ENCODE measurements at regions of chr1 and their contacts with region 1.

Region 1: DNA sequence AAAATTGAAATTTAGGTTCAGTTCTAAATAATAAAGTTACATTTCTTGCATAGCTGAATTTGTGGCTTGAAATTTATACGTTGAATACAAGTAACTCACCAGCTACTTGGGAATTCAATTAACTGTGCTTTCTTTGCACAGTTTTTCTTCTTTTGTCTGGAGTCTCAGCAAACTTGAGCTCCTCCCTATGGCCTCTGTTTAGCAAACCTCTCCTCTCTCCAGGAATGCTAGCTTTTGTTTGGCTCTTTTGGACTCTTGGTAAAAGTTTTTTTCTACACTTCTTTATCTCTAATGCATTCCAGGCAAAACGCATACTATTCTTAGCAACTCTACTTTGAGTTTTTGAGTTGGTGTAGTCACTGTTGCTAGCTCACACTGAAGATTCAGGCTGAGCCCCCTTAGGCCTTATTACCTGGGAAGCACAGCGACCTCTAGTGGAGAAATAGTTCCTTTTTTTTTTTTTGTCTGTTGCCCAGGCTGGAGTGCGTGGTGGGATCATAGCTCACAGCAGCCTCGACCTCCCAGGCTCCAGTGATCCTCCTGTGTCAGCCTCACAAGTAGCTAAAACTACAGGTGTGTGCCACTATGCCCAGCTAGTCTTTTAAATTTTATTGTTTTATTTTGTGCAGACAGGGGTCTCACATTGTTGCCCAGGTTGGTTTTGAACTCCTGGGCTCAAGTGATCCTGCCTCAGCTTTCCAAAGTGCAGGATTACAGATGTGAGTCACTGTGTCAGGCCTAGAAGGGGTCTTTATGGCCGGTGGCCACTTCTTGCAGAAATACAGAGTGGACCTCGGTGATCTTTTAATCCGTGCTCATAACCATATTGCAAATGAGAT is 61.7 kb downstream of the CASQ2 start:
- DNase-seq: peak; percentile 71
- ATAC-seq: peak; percentile 34
- H3K4me3 ChIP-seq: no peak overlapping the region
- H3K27ac ChIP-seq: no peak overlapping the region
- H3K4me1 ChIP-seq: peaks cover 25% of the 10 kb centered on the region
- H3K27me3 ChIP-seq: no peaks in the 10 kb centered on the region
- CTCF ChIP-seq: peak; percentile 91

Region 2: GRCh38 chr1:115609021-115609420 is 97.8 kb before region 1 on chr1:
- CTCF ChIA-PET with region 1: interaction called, 57 read pairs
- POLR2A ChIA-PET with region 1: no interaction called
- intact Hi-C with region 1: loop called (anchors 1 kb)
- DNase-seq: peak; percentile 17
- ATAC-seq: peak; percentile 22; the same call in 1 of the 2 replicates
- H3K4me3 ChIP-seq: no peak overlapping the region
- H3K27ac ChIP-seq: no peak overlapping the region
- H3K4me1 ChIP-seq: peaks cover 10% of the 10 kb centered on the region
- H3K27me3 ChIP-seq: no peaks in the 10 kb centered on the region
- CTCF ChIP-seq: no peak

Region 3: DNA sequence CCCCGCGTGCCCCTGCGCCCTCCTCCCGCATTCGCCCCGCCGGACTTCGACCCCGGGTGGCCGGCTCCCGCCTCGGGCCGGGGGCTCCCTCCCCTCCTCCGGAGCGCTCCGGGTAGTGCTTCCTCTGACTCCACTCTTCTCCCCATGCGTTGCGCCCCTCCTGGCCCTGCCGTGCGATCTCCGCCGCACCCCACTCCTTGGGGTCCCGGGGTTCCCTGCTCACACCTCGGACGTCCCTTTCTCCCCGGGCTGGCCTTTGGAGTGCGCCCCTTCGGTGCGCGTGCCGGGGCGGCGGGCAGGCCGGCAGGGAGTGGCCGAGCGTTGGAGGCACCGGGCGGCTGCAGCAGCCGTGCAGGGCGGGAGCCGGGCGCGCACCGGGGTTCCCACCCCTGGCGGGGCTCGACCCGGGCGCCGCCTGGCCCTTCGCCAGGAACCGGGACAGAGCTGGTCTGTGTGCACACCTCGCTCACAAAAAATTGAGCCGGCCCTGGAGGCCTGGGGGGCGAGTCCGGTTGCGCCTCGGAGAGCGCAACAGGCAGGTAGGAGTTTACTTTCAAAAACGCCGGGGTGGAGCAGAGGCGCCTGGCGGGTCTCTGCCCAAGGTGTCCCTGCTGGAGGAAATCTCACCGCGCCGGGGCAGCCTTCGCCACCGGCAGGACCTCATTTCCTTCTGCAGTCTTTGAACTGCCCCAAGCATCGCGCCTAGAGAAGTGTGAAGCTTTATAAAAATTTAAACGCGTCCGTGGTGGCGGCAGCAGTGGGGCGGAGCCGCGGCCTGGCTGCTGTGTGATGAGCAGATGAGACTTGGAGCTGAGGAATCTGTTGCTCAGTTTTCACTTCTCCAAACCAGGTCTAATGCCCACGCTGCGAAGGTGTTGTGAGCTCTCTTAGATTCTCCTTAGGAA is 64.4 kb before region 1 on chr1:
- CTCF ChIA-PET with region 1: interaction called, 26 read pairs
- POLR2A ChIA-PET with region 1: no interaction called
- intact Hi-C with region 1: no loop called
- DNase-seq: peak; percentile 56
- ATAC-seq: peak; percentile 56
- H3K4me3 ChIP-seq: peak overlapping the region; percentile 76
- H3K27ac ChIP-seq: peak overlapping the region; percentile 33
- H3K4me1 ChIP-seq: peaks cover 29% of the 10 kb centered on the region
- H3K27me3 ChIP-seq: no peaks in the 10 kb centered on the region
- CTCF ChIP-seq: 0 out of 2 replicates have a peak, but pooled peaks have one; percentile 25

Region 4: DNA sequence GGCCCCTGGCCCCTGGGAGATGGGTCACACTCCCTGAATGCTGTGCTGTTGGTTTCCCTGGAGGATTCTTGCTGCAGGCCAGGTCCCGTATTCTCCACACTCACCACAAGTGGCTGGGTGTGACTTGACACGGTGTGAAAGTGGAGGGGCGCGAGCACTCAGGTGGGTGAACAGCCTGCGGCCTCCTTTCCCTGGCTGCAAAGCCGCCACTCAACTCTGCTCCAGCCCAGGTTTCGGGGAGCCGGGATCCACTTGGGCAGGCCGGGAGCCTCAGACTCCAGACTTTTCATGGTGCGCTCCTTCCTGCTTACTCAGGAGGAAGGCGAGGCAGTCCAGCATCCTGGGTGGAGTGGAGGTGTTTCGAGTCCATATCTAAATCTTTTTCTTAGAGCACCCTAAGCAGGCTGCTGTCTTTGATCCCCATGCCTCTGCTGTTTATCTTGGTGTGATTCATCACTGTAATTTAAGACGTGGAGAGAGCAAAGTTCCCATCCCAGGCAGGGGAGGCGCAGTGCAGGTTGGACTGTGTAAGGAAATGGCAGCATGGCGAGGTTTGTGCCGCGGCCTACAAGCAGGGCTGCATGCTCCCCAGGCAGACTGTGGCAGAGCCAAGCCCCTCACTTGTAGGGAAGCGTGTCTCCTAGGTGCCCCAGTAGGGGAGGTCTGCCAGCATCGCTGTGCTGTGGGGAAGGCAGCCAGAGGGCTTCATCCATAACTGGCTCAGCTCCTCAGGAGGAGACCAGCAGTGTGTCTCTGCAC is 35.5 kb before region 1 on chr1:
- CTCF ChIA-PET with region 1: interaction called, 15 read pairs
- POLR2A ChIA-PET with region 1: interaction called, 4 read pairs
- intact Hi-C with region 1: no loop called
- DNase-seq: peak; percentile 86
- ATAC-seq: peak; percentile 79
- H3K4me3 ChIP-seq: peak overlapping the region; percentile 38; the same call in 1 of the 2 replicates
- H3K27ac ChIP-seq: peak overlapping the region; percentile 94
- H3K4me1 ChIP-seq: peaks cover 58% of the 10 kb centered on the region
- H3K27me3 ChIP-seq: no peaks in the 10 kb centered on the region
- CTCF ChIP-seq: peak; percentile 31; the same call in 1 of the 2 replicates

Region 5: DNA sequence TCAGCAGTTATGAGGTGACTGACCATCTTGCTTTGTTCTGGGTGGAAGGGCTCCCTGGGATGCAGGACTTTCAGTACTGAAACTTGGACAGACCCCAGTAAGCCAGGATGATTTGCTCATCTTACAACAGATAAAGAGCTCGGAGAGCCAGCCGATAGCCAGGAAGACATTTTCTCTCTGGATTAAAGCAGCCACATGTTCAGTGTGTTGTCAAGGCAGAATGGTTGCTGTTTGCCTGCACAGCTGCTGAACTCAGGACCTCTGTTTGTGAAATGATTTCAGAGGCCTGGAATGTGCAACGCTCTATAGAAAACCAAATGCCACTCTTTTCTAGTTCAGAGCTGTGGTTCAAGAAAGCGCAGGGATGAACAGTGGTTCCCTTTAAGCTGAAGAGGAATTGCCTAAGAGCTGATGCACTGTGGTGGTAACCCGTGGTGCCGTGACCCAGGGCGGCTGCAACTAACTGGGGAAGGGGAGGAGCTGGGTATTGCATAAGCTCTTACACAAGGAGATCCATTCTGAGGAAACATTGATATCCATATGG is 21.0 kb after region 1 on chr1:
- CTCF ChIA-PET with region 1: interaction called, 10 read pairs
- POLR2A ChIA-PET with region 1: no interaction called
- intact Hi-C with region 1: no loop called
- DNase-seq: peak; percentile 32
- ATAC-seq: no peak
- H3K4me3 ChIP-seq: no peak overlapping the region
- H3K27ac ChIP-seq: no peak overlapping the region
- H3K4me1 ChIP-seq: no peaks in the 10 kb centered on the region
- H3K27me3 ChIP-seq: no peaks in the 10 kb centered on the region
- CTCF ChIP-seq: no peak

Region 6: GRCh38 chr1:115764541-115764940 is 57.7 kb after region 1 on chr1:
- CTCF ChIA-PET with region 1: interaction called, 16 read pairs
- POLR2A ChIA-PET with region 1: interaction called, 3 read pairs
- intact Hi-C with region 1: no loop called
- DNase-seq: peak; percentile 83
- ATAC-seq: peak; percentile 67
- H3K4me3 ChIP-seq: no peak overlapping the region
- H3K27ac ChIP-seq: no peak overlapping the region
- H3K4me1 ChIP-seq: no peaks in the 10 kb centered on the region
- H3K27me3 ChIP-seq: no peaks in the 10 kb centered on the region
- CTCF ChIP-seq: peak; percentile 79

Region 7: DNA sequence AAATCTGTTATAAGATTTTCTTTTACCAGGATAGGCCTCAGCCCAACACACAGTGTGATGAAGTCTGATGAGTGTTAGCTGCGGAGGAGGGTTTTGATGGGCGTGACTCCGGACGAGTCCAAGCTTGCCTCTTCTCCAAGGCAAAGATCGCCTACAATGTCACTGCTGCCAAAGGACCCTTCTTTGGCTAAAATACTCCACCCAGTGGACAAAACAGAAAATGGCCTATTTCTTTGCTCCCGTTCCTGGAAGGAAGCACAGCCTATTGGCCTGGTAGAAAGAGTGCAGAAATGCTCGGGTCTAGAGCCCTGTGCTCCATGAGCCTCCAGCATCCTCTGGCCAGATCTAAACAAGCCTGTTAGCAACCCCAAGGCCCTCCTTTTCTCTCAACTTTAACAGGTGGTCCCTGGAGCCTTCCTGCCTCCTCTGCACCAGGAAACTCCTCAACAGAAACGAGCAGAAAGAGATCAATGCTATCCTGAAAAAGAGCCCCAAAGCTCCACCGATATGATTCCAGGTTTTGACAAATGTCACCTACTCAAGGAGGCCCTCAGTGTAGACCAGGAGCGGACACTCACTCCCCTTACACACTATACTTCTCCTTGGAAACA is 65.1 kb after region 1 on chr1:
- CTCF ChIA-PET with region 1: interaction called, 10 read pairs
- POLR2A ChIA-PET with region 1: interaction called, 3 read pairs
- intact Hi-C with region 1: loop called (anchors 5 kb)
- DNase-seq: peak; percentile 97
- ATAC-seq: peak; percentile 97
- H3K4me3 ChIP-seq: 0 out of 2 replicates have a peak overlapping the region, but pooled peaks have one; percentile 19
- H3K27ac ChIP-seq: no peak overlapping the region
- H3K4me1 ChIP-seq: peaks cover 5% of the 10 kb centered on the region; the same call in 1 of the 2 replicates
- H3K27me3 ChIP-seq: peaks cover 4% of the 10 kb centered on the region
- CTCF ChIP-seq: peak; percentile 84

Measured in PC-3 (cell line).